HCT116 (cell line): ENCODE measurements at regions of chr14 and their contacts with region 1.

Region 1: DNA sequence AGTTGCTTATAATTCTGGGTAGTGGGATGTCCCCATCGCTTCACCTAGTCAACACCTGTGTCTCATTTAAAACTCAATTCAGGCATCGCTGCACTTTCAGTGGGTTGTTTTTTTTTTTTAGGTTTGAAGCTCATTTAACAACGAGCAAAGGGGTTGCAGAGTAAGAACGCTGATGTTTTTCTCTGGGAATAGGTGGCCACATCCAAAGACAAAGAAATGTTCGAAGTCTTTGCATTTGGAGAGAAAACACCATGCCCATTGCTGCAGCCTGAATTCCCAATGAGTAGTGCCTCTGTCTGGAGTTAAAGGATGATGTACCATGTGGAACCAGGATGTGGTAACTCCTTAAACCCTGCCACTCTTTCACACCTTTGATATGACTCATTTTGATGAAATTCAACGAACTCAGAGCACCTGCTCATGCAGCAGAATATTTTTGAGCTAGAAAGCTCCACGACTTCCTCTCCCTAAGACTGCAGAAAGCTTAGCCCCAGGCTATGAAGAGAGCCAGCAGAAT is 35.1 kb upstream of the BATF start:
- DNase-seq: no peak
- ATAC-seq: no peak
- H3K4me3 ChIP-seq: no peak overlapping the region
- H3K27ac ChIP-seq: no peak overlapping the region
- H3K4me1 ChIP-seq: peaks cover 0 to 3% of the 10 kb centered on the region in 2 experiments; a peak in 1 of 4 replicates
- H3K27me3 ChIP-seq: no peaks in the 10 kb centered on the region
- CTCF ChIP-seq: no peak
- POLR2A ChIP-seq: no peak
- RAD21 ChIP-seq: no peak

Region 2: DNA sequence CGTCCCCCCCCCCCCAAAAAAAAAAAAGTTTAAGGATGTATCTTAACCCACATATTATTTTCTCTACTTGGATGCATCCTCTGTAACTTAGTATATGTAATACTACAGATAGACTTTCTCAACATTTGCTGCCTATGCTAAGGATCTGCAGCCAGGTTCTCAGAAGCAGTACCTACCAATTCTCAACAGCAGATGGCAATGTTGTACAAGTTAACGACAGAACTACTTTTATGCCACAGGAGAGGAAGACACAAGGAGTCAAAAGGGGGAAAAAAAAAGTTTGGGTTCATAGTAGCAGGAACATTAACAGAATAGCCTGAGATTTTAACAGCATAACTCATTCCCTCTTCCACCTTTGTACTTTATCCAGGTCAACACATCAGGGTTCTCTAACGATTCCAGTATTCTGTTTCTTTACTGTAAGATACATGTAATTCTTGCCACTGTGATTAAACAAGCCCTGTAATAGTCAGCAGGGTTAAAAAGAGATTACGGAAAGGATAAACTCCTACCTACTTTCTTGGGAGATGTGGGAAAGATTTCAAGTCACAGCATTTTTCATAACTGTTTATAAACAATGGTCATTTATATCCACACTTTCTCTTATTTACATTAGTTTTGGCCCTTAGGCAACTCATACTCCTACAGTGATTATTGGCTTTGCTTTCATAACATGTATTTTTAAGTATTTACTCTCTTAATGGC is 354.7 kb before region 1 on chr14:
- CTCF ChIA-PET with region 1: no interaction called
- POLR2A ChIA-PET with region 1: no interaction called
- RAD21 ChIA-PET with region 1: no interaction called
- intact Hi-C with region 1: loop called (anchors 1 kb)
- DNase-seq: peak; percentile 65
- ATAC-seq: peak; percentile 79
- H3K4me3 ChIP-seq: no peak overlapping the region
- H3K27ac ChIP-seq: no peak overlapping the region
- H3K4me1 ChIP-seq: peaks cover 10 to 15% of the 10 kb centered on the region in 2 experiments
- H3K27me3 ChIP-seq: no peaks in the 10 kb centered on the region
- CTCF ChIP-seq: peak; percentile 64 to 79 (median 75)
- POLR2A ChIP-seq: no peak
- RAD21 ChIP-seq: peak; percentile 88

Region 3: GRCh38 chr14:75499084-75499875 is 12.1 kb after region 1 on chr14:
- CTCF ChIA-PET with region 1: interaction called, 10 read pairs
- POLR2A ChIA-PET with region 1: no interaction called
- RAD21 ChIA-PET with region 1: no interaction called
- intact Hi-C with region 1: no loop called
- DNase-seq: no peak
- ATAC-seq: no peak
- H3K4me3 ChIP-seq: no peak overlapping the region
- H3K27ac ChIP-seq: no peak overlapping the region
- H3K4me1 ChIP-seq: no peaks in the 10 kb centered on the region
- H3K27me3 ChIP-seq: no peaks in the 10 kb centered on the region
- CTCF ChIP-seq: no peak
- POLR2A ChIP-seq: no peak
- RAD21 ChIP-seq: no peak

Region 4: GRCh38 chr14:75560962-75561432 is 73.8 kb after region 1 on chr14:
- CTCF ChIA-PET with region 1: interaction called, 11 read pairs
- POLR2A ChIA-PET with region 1: no interaction called
- RAD21 ChIA-PET with region 1: interaction called in 1 of 2 experiments, 6 read pairs
- intact Hi-C with region 1: no loop called
- DNase-seq: peak; percentile 63
- ATAC-seq: peak; percentile 99
- H3K4me3 ChIP-seq: no peak overlapping the region
- H3K27ac ChIP-seq: no peak overlapping the region
- H3K4me1 ChIP-seq: peaks cover 8 to 14% of the 10 kb centered on the region in 2 experiments; a peak in 3 of 4 replicates
- H3K27me3 ChIP-seq: no peaks in the 10 kb centered on the region
- CTCF ChIP-seq: peak; percentile 78 to 89 (median 89)
- POLR2A ChIP-seq: no peak
- RAD21 ChIP-seq: peak; percentile 87